Mammary epithelial cell (primary cell): ENCODE measurements at regions of chr2 and their contacts with region 1.

Region 1: DNA sequence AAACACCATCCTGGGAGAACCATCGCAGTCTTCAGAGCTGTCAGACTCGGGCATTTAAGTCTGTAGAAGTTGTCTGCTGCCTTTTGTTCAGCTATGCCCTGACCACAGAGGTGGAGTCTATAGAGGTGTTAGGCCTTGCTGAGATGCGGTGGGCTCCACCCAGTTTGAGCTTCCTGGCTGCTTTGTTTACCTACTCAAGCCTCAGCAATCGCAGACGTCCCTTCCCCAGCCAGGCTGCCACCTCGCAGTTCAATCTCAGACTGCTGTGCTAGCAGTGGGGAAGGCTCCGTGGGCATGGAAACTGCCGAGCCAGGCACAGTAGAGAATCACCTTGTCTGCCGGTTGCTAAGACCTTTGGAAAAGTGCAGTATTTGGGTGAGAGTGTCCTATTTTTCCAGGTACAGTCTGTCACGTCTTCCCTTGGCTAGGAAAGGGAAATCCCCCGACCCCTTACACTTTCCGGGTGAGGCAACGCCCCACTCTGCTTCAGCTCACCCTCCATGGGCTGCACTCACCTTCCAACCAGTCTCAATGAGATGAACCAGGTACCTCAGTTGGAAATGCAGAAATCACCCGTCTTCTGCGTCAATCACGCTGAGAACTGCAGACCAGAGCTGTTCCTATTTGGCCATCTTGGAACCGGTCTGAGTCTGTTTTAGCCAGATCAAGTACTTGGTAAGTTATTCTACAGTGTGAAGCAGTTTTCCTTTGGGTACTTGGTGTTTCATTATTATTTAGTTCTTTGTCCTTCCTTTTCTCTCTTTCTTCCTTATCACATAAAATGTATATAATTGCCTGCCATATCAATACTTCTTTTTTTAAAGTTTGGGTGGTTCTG is 71.5 kb downstream of the CDC42EP3 start:
- DNase-seq: no peak
- H3K4me3 ChIP-seq: no peak overlapping the region
- H3K27ac ChIP-seq: no peak overlapping the region
- H3K4me1 ChIP-seq: peaks cover 7% of the 10 kb centered on the region
- H3K27me3 ChIP-seq: no peaks in the 10 kb centered on the region
- CTCF ChIP-seq: no peak

Region 2: DNA sequence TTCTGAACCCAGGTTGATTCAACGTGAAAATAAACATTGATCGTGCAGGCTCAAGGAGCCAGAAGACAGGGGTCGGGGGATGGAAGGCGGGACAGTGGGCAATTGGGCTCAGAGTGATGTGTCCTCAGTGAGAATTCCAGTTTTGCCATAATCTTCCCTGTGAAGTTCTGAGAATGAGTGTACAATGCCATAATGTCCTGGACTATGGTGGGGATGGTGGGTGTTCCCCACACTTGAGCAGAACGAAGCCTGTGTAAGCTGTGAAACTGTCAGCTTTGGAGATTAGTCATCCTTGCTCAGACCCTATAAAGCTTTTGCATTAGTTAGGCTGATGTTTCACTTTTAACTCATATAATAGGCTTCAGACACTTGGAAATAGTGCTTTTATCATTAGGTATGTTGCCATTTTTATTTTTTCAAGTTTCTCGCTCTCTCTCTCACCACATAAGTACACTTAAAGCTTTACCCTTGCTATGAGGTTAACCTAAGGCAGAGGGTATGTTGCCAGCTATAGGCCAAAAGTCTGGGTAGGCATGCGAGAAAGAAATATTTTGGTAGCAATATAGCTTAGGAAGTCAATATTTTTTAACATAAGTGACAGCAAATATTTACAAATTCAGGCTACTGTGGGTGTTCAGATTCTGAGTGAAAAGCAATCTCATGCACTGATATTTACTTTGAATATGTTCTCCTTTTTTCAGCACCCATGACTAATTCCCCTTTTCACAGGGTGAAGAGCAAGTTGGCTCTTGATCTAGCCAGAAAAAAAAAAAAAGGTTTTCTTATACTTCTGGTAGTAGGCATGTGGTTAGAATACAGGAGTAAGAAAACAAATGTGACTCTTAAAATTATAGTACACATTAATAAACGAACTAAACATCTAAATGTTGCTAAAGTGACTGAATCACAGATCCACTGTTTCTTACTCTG is 24.3 kb after region 1 on chr2:
- CTCF ChIA-PET with region 1: no interaction called
- dilution Hi-C with region 1: no loop called
- in situ Hi-C with region 1: no loop called
- intact Hi-C with region 1: no loop called
- DNase-seq: peak; percentile 86
- H3K4me3 ChIP-seq: no peak overlapping the region
- H3K27ac ChIP-seq: peak overlapping the region; percentile 79
- H3K4me1 ChIP-seq: peaks cover 37% of the 10 kb centered on the region
- H3K27me3 ChIP-seq: no peaks in the 10 kb centered on the region
- CTCF ChIP-seq: no peak

Region 3: DNA sequence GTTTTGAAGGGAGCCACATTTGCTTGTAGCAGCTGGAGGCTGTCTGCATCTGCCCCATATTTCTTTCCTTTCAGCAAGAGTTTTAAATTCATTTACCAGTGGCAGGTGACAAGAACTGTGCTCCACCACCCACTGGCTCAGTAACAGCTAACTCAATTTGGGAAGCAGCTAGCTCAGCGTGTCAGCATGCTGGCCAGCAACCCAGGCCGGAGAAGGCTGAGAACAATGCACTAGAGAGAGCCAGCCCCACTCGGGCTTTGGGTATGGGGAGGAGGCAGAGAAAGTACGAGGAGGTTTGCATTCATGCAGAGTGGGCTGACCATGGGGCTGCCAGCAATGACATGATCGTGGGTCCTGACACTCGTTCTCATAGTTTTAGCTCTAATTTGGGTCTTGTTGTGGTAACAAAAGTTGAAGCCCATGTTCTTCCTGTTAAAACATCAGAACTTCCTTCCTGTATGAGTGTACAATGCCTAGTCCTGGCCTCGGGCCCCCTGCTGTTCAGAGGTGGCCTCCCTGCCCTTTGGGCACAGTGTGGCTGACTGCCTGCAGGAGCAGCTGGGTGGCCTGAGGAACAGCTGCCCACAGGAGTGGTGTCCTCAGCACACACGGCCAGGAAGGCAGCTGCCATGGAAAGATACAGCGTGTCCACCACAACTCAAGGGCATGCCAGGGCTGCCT is 48.6 kb after region 1 on chr2:
- CTCF ChIA-PET with region 1: interaction called, 11 read pairs
- dilution Hi-C with region 1: no loop called
- in situ Hi-C with region 1: no loop called
- intact Hi-C with region 1: no loop called
- DNase-seq: no peak
- H3K4me3 ChIP-seq: no peak overlapping the region
- H3K27ac ChIP-seq: no peak overlapping the region
- H3K4me1 ChIP-seq: peaks cover 49% of the 10 kb centered on the region
- H3K27me3 ChIP-seq: no peaks in the 10 kb centered on the region
- CTCF ChIP-seq: no peak